HepG2 (cell line): ENCODE measurements at regions of chr19 and their contacts with region 1.

Region 1: DNA sequence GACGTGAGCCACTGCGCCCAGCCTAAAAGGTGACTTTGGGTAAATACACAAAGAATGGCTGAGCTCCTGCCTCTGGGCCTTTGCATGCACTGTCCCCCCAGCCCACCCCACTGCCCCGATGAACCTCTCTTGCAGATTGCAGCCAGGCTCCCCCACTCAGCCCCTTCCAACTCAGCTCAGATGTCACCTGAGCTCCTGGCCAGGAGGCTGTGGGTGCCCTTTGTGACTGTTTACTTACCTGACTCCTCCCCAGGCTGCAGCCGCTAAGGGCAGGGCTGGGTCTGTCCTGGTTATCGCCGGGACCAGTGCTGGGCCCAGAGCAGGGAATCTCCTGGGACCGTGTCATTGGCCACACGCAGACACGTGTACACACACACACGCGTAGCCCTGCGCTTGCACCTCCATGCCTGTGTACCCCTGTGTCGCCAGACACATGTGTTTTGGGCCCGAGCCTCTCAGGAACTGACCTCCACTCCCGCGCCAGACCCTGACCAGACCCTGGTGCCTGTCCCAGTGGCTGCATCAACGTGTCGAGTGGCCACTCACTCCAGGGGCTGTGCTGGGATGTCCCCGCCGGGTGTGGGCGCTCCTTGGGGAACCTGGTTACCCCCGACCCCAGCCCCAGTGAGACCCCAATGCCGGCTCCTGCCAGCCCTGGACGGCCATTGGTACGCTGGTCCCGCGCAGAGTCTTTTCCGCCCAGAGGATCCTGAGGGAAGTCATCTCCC is 18.7 kb downstream of the EFNA2 start:
- DNase-seq: peak; percentile 81
- ATAC-seq: peak; percentile 96
- H3K4me3 ChIP-seq: peak overlapping the region; percentile 24 to 74 (median 42); a peak in 5 of 6 replicates
- H3K27ac ChIP-seq: peak overlapping the region; percentile 39
- H3K4me1 ChIP-seq: peaks cover 38% of the 10 kb centered on the region
- H3K27me3 ChIP-seq: no peaks in the 10 kb centered on the region
- CTCF ChIP-seq: 0 out of 2 replicates have a peak, but pooled peaks have one; percentile 9
- EP300 ChIP-seq: peak in 1 of 2 experiments; percentile 26; a peak in 1 of 4 replicates
- POLR2A ChIP-seq: peak; percentile 49 to 65; a peak in 3 of 4 replicates
- RAD21 ChIP-seq: no peak

Region 2: DNA sequence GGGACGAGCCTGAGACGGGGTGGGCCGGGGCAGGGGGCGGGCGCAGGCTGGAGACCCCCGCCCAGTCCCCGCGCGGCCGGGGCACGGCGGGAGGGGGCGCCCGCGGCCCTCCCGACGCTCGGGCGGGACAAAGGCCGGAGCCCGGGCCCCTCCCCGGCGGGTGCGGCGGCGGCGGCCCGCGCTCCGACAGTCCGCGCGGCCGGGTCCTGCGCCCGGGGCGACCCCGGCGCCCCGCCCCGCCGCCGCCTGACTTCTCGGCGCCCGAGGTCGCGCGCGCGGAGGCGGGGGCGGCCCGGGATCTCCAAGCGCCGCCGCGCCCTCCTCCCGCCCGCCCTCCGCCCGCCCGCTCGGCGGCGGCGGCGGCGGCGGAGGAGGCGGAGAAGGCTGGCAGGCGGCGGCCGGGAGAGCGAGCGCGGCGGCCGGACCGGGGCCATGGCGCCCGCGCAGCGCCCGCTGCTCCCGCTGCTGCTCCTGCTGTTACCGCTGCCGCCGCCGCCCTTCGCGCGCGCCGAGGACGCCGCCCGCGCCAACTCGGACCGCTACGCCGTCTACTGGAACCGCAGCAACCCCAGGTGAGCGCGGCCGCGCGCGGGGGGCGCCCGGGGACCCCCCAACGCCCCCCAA is 18.5 kb before region 1 on chr19 and contains the start of gene EFNA2:
- CTCF ChIA-PET with region 1: no interaction called
- POLR2A ChIA-PET with region 1: interaction called, 15 read pairs
- in situ Hi-C with region 1: no loop called
- intact Hi-C with region 1: no loop called
- DNase-seq: no peak
- ATAC-seq: no peak
- H3K4me3 ChIP-seq: peak within 1 kb of the TSS; percentile 75 to 89 (median 82)
- H3K27ac ChIP-seq: peak within 1 kb of the TSS; percentile 75
- H3K4me1 ChIP-seq: peaks cover 67% of the 10 kb centered on the region
- H3K27me3 ChIP-seq: no peaks in the 10 kb centered on the region; a peak in 1 of 5 replicates
- CTCF ChIP-seq: no peak
- EP300 ChIP-seq: no peak
- POLR2A ChIP-seq: no peak
- RAD21 ChIP-seq: no peak
- total RNA-seq, gene EFNA2: 4.3 and 9.9 TPM in 2 replicates

Region 3: DNA sequence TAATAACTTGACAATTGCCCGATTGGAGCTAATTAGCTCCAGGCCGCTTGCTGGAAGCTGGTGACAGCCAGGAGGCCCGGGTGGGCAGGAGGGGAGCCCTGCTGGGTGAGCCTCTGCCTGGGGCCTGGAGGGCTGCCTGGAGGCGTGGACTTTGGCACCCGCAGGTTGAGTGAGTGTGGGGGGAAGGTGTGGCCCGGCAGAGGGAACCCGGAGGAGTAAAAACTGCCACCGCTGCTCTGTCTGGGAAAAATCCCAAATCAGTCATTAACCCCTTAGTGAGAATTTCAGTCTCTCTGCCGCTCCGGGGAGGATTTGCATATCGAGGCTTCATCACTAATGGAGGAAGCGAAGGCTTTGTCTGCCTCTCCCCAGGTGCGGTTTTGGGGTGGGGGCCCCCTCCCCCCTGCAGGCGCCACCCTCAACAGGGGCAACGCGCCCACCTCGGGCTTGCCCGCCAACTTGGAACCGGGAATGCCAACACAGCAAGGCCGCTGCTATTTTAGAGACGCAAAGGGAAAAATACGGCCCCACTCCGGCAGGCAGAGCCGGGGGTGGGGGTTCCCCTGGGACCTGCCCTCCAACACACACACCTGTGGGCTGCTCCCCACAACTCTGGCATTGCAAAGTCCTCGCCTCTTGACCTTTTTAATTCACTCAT is 12.5 kb before region 1 on chr19:
- CTCF ChIA-PET with region 1: no interaction called
- POLR2A ChIA-PET with region 1: interaction called, 15 read pairs
- in situ Hi-C with region 1: no loop called
- intact Hi-C with region 1: no loop called
- DNase-seq: no peak
- ATAC-seq: peak; percentile 53
- H3K4me3 ChIP-seq: peak overlapping the region; percentile 25 to 75 (median 63); a peak in 3 of 6 replicates
- H3K27ac ChIP-seq: peak overlapping the region; percentile 91
- H3K4me1 ChIP-seq: peaks cover 61% of the 10 kb centered on the region
- H3K27me3 ChIP-seq: no peaks in the 10 kb centered on the region
- CTCF ChIP-seq: no peak
- EP300 ChIP-seq: peak in 1 of 2 experiments; percentile 14; a peak in 1 of 4 replicates
- POLR2A ChIP-seq: no peak
- RAD21 ChIP-seq: 0 out of 2 replicates have a peak, but pooled peaks have one; percentile 18

Region 4: DNA sequence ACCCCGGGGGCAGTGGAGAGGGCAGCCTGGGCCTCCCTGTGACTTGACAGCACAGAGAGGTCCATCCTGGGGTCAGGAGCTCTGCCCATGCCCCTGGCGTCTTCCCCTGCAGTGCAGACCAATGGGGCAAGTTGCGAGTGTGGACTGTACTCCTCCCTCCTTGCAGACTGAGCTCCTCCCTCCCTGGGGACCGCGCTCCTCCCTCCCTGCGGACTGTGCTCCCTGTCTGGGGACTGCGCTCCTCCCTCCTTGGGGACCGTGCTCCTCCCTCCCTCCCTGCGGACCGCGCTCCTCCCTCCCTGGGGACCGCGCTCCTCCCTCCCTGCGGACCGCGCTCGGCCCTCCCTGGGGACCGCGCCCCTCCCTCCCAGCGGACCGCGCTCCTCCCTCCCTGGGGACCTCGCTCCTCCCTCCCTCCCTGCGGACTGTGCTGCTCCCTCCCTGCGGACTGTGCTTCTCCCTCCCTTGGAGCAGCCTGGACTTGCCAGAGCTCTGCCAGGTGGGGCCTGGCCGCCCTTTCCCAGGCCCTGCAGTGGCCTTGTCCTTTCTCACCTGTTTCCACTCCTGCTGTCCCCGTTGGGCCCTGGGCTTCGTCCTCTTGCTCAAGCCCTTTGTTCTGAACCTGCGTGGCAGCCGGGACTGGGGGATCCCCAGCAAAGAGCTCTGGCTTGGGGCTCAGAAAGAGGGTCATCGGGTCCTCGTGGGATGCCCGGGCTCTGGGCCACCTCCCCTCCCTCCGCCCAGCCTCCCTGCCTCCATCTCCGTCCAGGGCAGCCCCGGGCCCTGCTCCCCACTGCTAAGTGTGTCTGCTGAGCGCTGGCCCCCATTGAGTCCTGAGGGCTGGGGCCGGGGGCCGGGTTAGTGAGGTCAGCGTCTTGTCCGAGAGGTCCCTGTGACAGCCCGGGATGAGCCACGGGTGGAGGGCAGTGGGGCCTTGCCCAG is 90.2 kb after region 1 on chr19:
- CTCF ChIA-PET with region 1: no interaction called
- POLR2A ChIA-PET with region 1: no interaction called
- in situ Hi-C with region 1: no loop called
- intact Hi-C with region 1: no loop called
- DNase-seq: no peak
- ATAC-seq: peak; percentile 48
- H3K4me3 ChIP-seq: no peak overlapping the region
- H3K27ac ChIP-seq: no peak overlapping the region
- H3K4me1 ChIP-seq: peaks cover 30% of the 10 kb centered on the region
- H3K27me3 ChIP-seq: no peaks in the 10 kb centered on the region
- CTCF ChIP-seq: no peak
- EP300 ChIP-seq: no peak
- POLR2A ChIP-seq: peak in 1 of 2 experiments; percentile 74; a peak in 3 of 4 replicates
- RAD21 ChIP-seq: no peak